ENCODE measurements at regions of chr2 and their contacts with region 1.

Region 1: GRCh38 chr2:223727562-223727961 is 109.8 kb downstream of the AP1S3 start:
- DNase-seq: peak; percentile 15
- H3K4me3 Mint-ChIP-seq: no peak overlapping the region
- H3K27ac Mint-ChIP-seq: no peak overlapping the region
- H3K4me1 Mint-ChIP-seq: peaks cover 8% of the 10 kb centered on the region
- H3K27me3 Mint-ChIP-seq: peaks cover 3% of the 10 kb centered on the region

Region 2: GRCh38 chr2:223692191-223692947 is 35.2 kb before region 1 on chr2:
- intact Hi-C with region 1: loop called (anchors 5 kb)
- DNase-seq: no peak
- H3K4me3 Mint-ChIP-seq: no peak overlapping the region
- H3K27ac Mint-ChIP-seq: no peak overlapping the region
- H3K4me1 Mint-ChIP-seq: peaks cover 7% of the 10 kb centered on the region
- H3K27me3 Mint-ChIP-seq: peaks cover 25% of the 10 kb centered on the region

Region 3: DNA sequence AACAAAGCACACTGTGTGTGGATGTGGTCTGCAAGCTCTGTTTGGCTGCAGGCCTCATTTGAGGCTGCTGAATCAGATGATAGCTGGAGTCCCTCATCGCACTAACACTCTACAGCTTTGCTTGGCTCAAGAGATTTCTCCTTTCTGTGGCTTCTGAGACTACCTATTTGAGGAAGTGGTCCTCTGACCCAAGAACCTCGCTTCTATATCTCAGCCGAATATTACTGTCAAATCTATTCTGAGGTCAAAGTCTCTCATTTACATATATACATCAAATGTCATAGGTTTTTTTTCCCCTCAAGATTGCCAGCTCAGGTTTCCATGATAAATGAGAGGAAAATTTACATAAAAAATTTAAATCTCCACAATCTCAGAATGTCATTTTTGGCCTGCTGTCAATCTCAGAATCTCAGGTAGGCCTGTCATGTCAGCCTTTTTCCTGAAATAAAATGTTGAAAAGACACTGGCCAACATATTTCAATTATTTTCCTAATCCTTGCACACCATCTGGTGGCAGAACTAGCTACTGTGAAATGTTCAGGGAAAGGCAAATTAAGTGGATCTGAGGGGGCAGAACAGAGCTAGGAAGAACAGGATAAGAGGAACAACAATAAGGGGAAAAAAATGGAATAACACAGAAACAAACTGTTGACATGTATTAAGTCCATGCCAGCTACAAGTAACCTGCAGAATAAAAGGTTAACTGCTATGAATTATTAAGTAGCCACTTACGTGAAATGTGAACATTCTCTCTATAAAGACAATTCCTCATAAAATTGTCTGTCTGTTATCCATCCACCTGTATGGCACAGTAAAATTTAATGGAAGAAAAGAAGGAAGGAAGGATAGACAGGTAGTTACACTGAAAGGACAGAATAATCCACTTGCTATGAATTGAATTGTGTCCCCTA is 70.5 kb after region 1 on chr2:
- intact Hi-C with region 1: loop called (anchors 1 kb)
- DNase-seq: no peak
- H3K4me3 Mint-ChIP-seq: no peak overlapping the region
- H3K27ac Mint-ChIP-seq: no peak overlapping the region
- H3K4me1 Mint-ChIP-seq: peaks cover 13% of the 10 kb centered on the region
- H3K27me3 Mint-ChIP-seq: peaks cover 2% of the 10 kb centered on the region

Region 4: GRCh38 chr2:223860809-223861738 is 133.5 kb after region 1 on chr2:
- intact Hi-C with region 1: loop called (anchors 10 kb)
- DNase-seq: no peak
- H3K4me3 Mint-ChIP-seq: no peak overlapping the region
- H3K27ac Mint-ChIP-seq: no peak overlapping the region
- H3K4me1 Mint-ChIP-seq: peaks cover 20% of the 10 kb centered on the region
- H3K27me3 Mint-ChIP-seq: no peaks in the 10 kb centered on the region

Region 5: DNA sequence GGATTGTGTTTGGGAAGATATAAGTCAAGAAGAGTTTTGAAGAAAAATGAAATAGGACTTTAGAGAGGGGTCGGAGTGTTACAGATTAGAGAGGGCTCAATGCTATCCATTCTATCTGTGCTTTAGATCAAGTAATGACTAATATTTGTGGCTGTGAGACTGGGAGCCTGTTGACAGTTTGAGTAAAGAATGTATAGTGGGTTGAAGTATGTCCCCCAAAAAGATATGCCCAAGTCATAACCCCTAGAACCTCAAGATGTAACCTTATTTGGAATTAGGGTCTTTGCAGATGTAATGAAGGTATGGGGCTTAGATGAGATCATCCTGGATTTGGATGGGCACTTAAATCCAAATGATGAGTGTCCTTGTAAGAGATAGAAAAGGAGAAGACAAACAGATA is 366.9 kb after region 1 on chr2:
- intact Hi-C with region 1: no loop called
- DNase-seq: no peak
- H3K4me3 Mint-ChIP-seq: no peak overlapping the region
- H3K27ac Mint-ChIP-seq: no peak overlapping the region
- H3K4me1 Mint-ChIP-seq: peaks cover 3% of the 10 kb centered on the region
- H3K27me3 Mint-ChIP-seq: peaks cover 15% of the 10 kb centered on the region

Region 6: GRCh38 chr2:224284134-224284946 is 556.8 kb after region 1 on chr2:
- intact Hi-C with region 1: loop called (anchors 10 kb)
- DNase-seq: no peak
- H3K4me3 Mint-ChIP-seq: no peak overlapping the region
- H3K27ac Mint-ChIP-seq: no peak overlapping the region
- H3K4me1 Mint-ChIP-seq: no peaks in the 10 kb centered on the region
- H3K27me3 Mint-ChIP-seq: peaks cover 33% of the 10 kb centered on the region

Measured in activated T-helper 2 cell treated with anti-CD3 and anti-CD28 coated beads, Interferon-gamma antibody, Interleukin-2, Interleukin-4, amounts not matched to agents 10 μg/mL and 5 μg/mL and 100 μg/mL, durations not matched to agents 14 hours and 24 hours and 36 hours (primary cell).